ENCODE measurements at regions of chr12 and their contacts with region 1.

Region 1: DNA sequence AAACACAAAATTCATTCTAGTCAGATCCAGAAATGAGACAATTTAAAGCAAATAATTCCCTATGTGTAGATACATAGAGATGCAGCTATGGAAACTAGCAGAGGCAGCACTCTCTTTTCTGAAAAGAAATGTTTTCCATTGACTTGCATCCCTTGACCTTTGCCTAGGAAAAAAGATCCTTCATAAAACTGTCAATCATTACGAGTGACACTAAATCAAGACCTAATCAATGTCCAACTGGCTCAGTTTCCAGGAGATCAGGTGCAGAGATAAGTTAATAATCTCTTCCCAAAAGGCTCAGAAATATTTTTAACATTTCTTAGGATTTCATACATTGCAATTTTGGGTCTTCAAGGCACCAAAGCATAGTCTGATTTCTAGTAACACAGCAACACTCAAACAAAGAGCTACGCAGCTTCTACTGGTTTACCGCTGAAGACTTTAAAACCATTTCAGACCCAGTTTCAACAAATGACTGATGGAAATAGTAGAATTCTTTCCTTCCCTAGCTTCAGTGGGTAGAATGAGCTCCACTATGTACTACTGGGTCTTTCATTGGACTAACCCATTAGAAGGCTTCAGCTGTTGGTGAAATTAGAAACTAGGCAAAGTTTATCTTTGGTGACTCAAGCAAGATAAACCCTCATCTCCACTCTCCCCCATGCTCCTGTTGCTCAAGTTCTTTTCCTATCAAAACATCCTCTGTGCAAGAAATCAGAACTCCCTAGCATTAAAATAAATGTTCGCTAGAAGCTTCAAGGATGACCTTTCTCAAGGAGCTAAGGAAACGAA is 159.4 kb downstream of the PAWR start:
- DNase-seq: no peak
- CTCF ChIP-seq: no peak

Region 2: DNA sequence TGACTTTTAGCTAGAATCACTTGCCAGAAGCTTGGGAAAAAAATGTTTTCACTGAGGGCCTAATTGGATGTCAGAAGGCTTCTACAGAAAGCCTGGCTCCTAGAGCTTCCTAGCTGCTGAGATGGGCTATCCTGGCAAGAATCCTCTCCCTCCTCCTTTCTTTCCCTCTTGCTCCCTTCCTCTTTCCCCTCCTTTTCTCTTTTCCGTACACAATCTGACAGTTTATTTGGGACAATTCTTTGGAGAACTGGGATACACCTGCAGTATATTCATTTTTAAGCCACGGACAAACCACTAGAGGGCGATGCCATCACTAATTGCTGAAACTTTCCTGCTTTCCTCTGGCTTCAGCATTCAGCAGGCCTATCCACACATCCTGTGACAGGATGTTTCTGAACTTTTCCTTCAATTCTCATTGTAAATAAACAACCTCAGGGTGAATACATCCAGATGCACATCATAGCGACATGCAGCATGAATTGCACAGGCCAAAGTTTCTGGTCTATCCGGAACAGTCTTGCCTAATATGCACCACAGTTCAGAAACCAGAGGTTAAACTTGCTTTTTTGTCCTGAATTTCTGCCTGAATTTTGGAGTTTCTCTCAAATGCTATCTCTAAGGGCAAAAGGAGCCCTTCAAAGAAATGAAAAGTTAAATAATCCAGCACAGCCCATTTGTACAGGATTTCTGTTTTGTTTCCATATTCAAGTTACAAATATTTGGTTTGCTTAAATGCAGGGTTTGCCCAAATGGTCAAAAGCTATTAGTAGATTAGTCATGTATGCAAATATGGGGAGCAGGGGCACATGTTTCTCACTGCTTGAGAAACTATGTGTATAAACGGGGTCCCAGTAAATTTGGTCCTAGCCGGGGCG is 16.7 kb after region 1 on chr12:
- CTCF ChIA-PET with region 1: interaction called, 12 read pairs
- POLR2A ChIA-PET with region 1: no interaction called
- DNase-seq: peak; percentile 41
- CTCF ChIP-seq: peak; percentile 69